ENCODE measurements at regions of chr11 and their contacts with region 1.

Region 1: DNA sequence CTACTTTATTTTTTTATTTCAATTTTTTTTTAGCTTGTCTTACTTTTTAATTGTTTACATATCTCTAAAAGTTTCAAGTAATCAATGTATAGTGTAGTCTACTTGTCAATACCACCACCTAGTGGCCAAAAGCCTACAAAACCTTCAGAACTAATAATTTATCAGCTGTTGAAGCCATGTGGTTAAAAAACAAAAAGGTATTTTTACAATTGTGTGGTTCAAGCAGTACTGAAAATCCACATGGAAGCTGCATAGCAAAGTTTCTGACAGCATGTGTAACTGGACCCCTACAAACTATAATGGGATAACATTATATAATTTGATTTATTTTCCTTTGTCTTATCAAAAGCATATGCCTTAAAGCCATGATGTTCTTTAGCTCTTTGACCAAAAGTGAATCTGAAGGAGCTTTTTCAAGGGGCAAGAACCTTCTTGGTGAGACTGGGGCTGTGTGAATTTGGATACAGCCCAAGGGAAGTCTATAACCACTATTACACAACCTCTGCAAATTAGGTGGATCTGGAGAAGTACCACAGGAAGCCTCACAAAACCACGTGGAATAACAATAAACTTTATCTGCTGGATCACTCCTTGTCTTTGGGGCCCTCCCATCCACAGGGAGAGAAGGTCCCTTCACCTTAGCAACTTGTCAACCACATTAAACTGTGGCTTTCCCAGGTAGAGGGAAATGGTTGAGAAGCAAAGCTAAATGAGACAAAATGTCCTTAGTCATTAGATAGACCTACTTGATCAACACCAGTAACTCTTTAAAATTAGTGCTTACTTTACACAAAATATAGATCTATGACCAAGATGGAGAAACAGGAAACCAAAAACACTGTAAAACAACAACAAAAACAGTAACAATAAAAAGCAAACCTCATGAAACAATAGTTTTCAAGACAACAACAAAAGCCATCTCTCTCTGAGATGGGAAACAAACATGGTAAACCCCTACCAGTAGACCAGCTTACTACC is 9.9 kb downstream of the NARS2 start:
- DNase-seq: no peak
- H3K4me3 ChIP-seq: no peak overlapping the region
- H3K27ac ChIP-seq: no peak overlapping the region
- H3K4me1 ChIP-seq: peaks cover 18 to 37% (median 27%) of the 10 kb centered on the region in 4 donors
- H3K27me3 ChIP-seq: no peaks in the 10 kb centered on the region
- CTCF ChIP-seq: peak; percentile 69 to 77 (median 76)
- EP300 ChIP-seq: no peak
- POLR2A ChIP-seq: no peak

Region 2: DNA sequence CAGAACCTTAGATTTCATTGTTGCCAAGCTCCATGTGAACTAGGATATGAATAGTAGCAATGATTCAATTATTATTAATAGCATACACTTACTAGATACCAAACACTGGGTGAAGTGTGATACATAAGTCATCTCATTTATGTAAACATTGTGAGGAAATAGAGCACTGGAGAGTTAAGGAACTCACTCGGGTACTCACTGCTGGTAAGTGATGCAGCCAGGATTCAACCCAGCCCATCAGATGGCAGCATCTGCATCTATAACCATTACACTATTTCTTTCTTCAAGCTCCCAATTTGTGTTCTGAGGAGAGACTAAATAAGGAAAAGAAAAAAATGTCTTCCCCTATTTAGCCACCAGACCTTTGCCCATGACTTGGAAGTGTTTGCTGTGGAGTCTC is 415.1 kb before region 1 on chr11:
- intact Hi-C with region 1: loop called (anchors 5 kb)
- DNase-seq: no peak
- H3K4me3 ChIP-seq: no peak overlapping the region
- H3K27ac ChIP-seq: no peak overlapping the region
- H3K4me1 ChIP-seq: peaks cover 0 to 10% (median 6%) of the 10 kb centered on the region in 4 donors
- H3K27me3 ChIP-seq: no peaks in the 10 kb centered on the region
- CTCF ChIP-seq: peak; percentile 39 to 55 (median 43)
- EP300 ChIP-seq: no peak
- POLR2A ChIP-seq: no peak

Region 3: DNA sequence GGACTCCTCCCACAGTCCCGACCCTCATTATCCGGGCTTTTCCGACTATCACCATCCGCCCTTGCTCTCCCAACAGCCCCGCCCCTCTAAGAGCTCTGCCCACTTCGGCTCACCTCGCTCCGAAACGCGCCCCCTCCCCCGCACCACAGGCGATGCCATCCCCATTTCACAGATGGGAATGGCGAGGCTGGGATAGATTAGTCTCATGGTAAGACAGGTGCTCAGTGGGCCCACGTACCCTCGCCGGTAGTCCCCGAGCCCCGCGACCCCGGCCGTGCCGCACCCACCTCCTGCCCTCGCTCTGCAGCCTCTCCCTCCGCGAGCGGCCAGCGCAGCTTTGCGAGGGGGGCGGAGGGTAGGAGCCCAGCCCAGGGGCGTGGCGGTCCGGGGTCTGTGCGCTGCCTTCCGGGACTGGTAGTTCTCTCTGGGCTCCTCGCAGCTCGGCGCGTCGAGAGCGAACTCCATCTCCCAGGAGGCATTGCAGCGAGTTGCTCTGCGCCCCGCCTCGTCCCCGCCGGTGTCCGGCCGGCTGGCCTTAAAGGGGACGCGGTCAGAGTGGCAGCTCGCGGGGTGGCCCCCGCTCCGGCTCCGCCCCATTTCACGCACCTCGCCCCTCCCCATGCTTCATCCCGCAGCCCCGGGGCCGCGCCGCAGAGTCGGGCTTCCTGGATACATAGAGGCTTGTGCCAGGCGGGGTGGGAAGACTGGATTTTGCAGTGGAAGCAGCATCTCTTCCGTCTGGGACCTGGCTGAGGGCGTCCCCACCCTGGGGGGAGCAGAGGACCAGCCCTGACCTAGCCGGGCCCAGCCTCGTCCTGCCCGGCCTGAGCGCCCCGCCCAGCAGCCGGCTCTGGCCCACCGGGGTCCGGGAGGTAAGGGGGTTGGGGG is 376.2 kb before region 1 on chr11 and contains the starts of genes KCTD21 and USP35:
- intact Hi-C with region 1: loop called (anchors 5 kb)
- DNase-seq: peak; percentile 99
- H3K4me3 ChIP-seq: peak within 1 kb of the TSS; percentile 75 to 94 (median 82)
- H3K27ac ChIP-seq: peak within 1 kb of the TSS; percentile 80 to 89 (median 86)
- H3K4me1 ChIP-seq: peaks cover 25 to 68% (median 61%) of the 10 kb centered on the region in 4 donors
- H3K27me3 ChIP-seq: no peaks in the 10 kb centered on the region
- CTCF ChIP-seq: no peak
- EP300 ChIP-seq: no peak
- POLR2A ChIP-seq: peak; percentile 74
- total RNA-seq, gene KCTD21: 6.6 to 21.0 (median 12.1) TPM
- total RNA-seq, gene USP35: 5.8 to 15.4 (median 11.3) TPM

Region 4: GRCh38 chr11:78228467-78228866 is 336.3 kb before region 1 on chr11:
- intact Hi-C with region 1: loop called (anchors 5 kb)
- DNase-seq: peak; percentile 70
- H3K4me3 ChIP-seq: no peak overlapping the region
- H3K27ac ChIP-seq: no peak overlapping the region
- H3K4me1 ChIP-seq: peaks cover 14 to 39% (median 32%) of the 10 kb centered on the region in 4 donors
- H3K27me3 ChIP-seq: no peaks in the 10 kb centered on the region
- CTCF ChIP-seq: peak; percentile 50 to 52 (median 51)
- EP300 ChIP-seq: no peak
- POLR2A ChIP-seq: no peak

Region 5: GRCh38 chr11:78416305-78417178 is 148.2 kb before region 1 on chr11:
- intact Hi-C with region 1: loop called (anchors 2 kb)
- DNase-seq: peak; percentile 97
- H3K4me3 ChIP-seq: peak overlapping the region; percentile 82 to 100 (median 94)
- H3K27ac ChIP-seq: peak overlapping the region; percentile 96 to 99 (median 99)
- H3K4me1 ChIP-seq: peaks cover 36 to 50% (median 40%) of the 10 kb centered on the region in 4 donors
- H3K27me3 ChIP-seq: no peaks in the 10 kb centered on the region
- CTCF ChIP-seq: peak; percentile 24 to 49 (median 35)
- EP300 ChIP-seq: no peak
- POLR2A ChIP-seq: no peak

Region 6: GRCh38 chr11:78533399-78533798 is 31.4 kb before region 1 on chr11:
- intact Hi-C with region 1: no loop called
- DNase-seq: no peak
- H3K4me3 ChIP-seq: no peak overlapping the region
- H3K27ac ChIP-seq: no peak overlapping the region
- H3K4me1 ChIP-seq: no peaks in the 10 kb centered on the region
- H3K27me3 ChIP-seq: no peaks in the 10 kb centered on the region
- CTCF ChIP-seq: no peak
- EP300 ChIP-seq: no peak
- POLR2A ChIP-seq: no peak

Region 7: DNA sequence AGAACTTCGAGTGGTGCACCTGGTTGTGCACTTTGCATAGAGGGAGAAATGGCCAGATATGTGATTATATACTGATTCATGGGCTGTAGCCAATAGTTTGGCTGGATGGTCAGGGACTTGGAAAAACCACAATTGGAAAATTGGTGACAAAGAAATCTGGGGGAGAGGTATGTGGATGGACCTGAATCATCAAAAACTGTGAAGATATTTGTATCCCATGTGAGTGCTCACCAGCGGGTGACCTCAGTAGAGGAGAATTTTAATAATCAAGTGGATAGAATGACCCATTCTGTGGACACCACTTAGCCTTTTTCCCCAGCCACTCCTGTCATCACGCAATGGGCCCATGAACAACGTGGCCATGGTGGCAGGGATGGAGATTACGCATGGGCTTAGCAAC is 57.9 kb after region 1 on chr11:
- intact Hi-C with region 1: no loop called
- DNase-seq: no peak
- H3K4me3 ChIP-seq: no peak overlapping the region
- H3K27ac ChIP-seq: no peak overlapping the region
- H3K4me1 ChIP-seq: no peaks in the 10 kb centered on the region
- H3K27me3 ChIP-seq: no peaks in the 10 kb centered on the region
- CTCF ChIP-seq: no peak
- EP300 ChIP-seq: no peak
- POLR2A ChIP-seq: no peak